ENCODE measurements at regions of chr1 and their contacts with region 1.

Region 1: DNA sequence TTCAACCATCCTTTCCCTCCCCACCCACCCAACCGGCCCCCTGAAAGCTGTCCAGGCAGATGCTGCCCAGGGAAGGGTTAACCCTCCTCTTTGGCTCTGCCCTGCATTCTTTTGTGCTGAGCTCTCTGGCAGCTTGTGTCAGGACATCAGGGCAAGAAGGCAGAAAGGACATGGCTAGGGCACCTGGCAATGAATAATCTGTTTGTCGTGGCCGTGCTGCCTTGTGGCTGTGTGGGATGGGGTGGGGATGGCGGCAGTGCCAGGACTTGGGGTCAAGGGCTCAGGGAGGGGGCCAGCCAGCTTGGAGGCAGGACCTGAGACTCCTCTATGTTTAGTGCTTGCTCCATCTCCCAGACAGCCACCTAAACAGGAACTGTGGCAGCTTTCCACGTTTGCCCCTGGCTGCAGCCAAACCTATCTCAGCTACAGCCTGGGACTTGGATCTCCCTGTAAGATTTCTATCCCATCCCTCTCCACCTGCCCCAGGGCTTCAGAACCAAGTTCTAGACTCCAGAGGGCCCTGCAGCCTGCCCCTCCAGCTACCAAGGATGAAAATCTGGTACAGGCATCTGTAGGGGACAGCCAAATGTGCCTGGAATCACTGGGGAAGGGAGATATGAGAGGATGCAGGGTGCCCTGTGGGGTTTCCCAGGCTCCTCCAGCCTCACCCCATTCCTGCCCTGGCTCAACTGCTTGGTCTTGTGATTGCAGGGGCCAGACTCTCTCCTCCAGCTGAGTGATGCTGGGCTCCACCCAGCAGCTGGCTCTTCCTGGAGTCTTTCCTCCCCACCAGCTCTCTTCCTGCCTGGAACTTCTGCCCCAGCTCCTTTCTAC is 9.7 kb upstream of the GPR37L1 start:
- DNase-seq: no peak
- ATAC-seq: peak; percentile 62
- H3K4me3 ChIP-seq: no peak overlapping the region
- H3K27ac ChIP-seq: peak overlapping the region; percentile 69
- H3K4me1 ChIP-seq: peaks cover 41% of the 10 kb centered on the region
- H3K27me3 ChIP-seq: no peaks in the 10 kb centered on the region
- CTCF ChIP-seq: no peak

Region 2: DNA sequence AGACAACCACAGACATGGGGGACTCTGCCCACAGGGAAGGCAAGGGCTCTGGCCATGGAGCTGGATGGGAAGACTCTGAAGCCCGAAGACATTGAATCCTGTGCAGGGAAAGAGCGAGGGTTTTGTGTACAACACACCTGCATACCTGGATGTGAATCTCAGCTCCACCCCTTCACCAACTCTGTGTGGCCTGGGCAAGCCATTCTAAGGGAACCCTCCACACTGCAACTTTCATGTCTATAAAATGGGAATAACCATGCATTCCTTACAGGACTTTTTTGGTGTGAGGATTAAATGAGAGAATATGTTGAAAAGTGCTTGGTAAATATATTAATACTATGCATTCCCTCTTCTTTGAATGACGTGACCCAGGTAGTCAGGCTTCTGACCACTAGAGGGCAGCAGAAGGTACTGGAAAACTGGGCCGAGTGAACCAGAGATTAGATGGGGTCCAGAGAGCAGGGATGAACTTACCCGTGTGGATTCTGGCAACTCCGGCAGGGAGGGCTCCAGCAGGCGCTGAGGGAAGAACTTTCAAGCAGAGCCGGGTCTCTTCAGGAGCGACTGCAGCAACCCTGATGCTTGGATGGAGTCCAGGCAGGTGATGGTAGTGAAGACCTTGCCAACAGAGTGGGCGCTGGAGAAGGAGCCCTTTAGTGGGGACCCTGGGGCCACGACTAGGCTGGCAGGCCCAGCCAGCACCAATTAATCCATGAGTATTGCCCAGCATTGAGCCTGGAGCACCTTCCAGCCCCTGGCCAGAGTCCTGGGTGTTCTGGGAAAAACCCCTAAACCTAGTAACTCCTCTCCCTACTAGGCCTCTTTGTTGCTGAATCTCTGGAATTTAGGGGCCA is 103.5 kb before region 1 on chr1:
- CTCF ChIA-PET with region 1: interaction called, 11 read pairs
- POLR2A ChIA-PET with region 1: interaction called, 5 read pairs
- in situ Hi-C with region 1: no loop called
- intact Hi-C with region 1: no loop called
- DNase-seq: no peak
- ATAC-seq: peak; percentile 84
- H3K4me3 ChIP-seq: peak overlapping the region; percentile 13 to 72; a peak in 3 of 4 replicates
- H3K27ac ChIP-seq: peak overlapping the region; percentile 86
- H3K4me1 ChIP-seq: peaks cover 52% of the 10 kb centered on the region
- H3K27me3 ChIP-seq: no peaks in the 10 kb centered on the region
- CTCF ChIP-seq: peak; percentile 91

Region 3: DNA sequence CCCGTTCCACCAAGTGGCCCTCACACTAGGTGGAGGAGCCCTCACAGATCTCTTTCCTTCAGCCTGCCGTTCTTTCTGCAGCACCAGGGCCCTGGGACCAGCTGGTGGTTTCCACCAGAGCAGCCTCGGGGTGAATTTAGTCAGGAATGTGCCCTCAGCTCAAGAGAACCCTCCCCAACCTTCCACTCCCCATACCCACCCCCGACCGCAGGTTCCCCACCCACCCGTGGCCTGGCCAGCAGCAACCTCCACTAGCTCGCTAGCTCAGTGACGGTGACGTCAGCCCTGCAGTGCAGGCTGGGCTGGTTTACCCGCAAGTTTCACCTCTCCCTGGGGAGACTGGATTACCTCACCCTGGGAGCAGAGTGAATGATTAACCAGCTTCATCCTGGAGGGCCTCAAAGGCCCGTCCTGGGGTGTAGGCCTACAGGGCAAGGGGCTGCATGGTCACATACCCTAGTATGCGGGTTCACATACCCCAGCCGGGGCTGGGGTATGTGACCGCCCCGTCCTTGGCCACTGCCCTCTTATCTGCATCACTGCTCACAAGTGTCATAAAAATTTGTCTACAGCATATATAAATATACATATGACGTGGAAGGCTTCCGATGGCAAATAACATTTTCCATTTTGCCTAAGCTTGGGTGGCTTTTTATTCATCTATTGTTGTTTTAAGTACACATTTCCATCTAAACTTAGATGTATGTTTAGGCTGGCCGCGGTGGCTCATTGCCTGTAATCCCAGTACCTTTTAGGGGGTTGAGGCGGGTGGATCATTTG is 78.2 kb before region 1 on chr1:
- CTCF ChIA-PET with region 1: no interaction called
- POLR2A ChIA-PET with region 1: no interaction called
- in situ Hi-C with region 1: no loop called
- intact Hi-C with region 1: no loop called
- DNase-seq: no peak
- ATAC-seq: peak; percentile 86
- H3K4me3 ChIP-seq: no peak overlapping the region
- H3K27ac ChIP-seq: peak overlapping the region; percentile 76
- H3K4me1 ChIP-seq: peaks cover 20% of the 10 kb centered on the region
- H3K27me3 ChIP-seq: no peaks in the 10 kb centered on the region
- CTCF ChIP-seq: no peak

Region 4: DNA sequence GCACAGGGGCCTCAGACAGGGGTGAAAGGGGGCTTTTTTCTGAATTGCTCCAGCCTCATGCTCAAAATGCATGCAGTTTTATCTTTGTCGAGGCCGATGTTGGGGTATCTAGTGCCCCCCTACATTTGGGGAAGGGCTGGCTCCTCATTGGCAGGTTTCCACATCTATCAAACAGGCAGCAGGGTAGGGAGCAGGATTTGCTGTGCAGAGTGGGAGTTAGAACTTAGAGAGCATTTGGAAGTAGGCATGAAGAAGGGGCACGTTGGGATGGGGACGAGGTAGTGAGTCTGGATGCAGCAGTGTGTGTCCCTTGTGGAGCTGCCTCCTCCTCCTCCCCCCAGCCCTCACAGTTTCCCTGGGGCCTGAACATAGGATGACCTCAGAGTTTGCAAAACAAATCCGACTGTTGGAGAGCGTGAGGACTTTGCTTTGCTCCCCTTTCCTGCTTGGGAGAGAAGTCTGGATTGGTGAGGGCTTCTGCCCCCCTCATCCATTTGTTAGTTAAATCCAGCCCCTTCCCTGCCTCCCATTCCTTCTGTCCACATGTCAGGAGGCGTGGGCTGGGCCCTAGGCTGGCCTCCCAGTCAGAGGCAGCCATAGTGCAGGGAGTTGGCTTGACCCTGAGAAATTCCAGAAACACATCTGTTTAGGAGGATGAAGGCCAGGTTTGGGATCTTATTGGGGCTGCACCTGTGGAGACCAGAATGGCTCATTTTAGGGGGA is 27.2 kb before region 1 on chr1:
- CTCF ChIA-PET with region 1: interaction called, 4 read pairs
- POLR2A ChIA-PET with region 1: interaction called, 10 read pairs
- in situ Hi-C with region 1: no loop called
- intact Hi-C with region 1: no loop called
- DNase-seq: no peak
- ATAC-seq: peak; percentile 60
- H3K4me3 ChIP-seq: no peak overlapping the region
- H3K27ac ChIP-seq: peak overlapping the region; percentile 41
- H3K4me1 ChIP-seq: peaks cover 21% of the 10 kb centered on the region
- H3K27me3 ChIP-seq: no peaks in the 10 kb centered on the region
- CTCF ChIP-seq: no peak

Measured in Panc1 (cell line).